Dorsolateral prefrontal cortex (tissue), 120 donors: ENCODE measurements at regions of chr10 and their contacts with region 1.

Region 1: GRCh38 chr10:13348216-13349017 is at the start of gene SEPHS1:
- DNase-seq: peak; percentile 45 to 78 (median 64)
- H3K4me3 ChIP-seq: peak within 1 kb of the TSS; percentile 65 to 99 (median 83)
- H3K27ac ChIP-seq: peak within 1 kb of the TSS; percentile 61 to 97 (median 91)
- H3K27me3 ChIP-seq: peaks cover 0 to 23% (median 0%) of the 10 kb centered on the region in 45 donors
- CTCF ChIP-seq: peak in 35 of 56 donors; percentile 8 to 53 (median 24)
- total RNA-seq, gene SEPHS1: 17.7 to 44.5 (median 30.7) TPM

Region 2: DNA sequence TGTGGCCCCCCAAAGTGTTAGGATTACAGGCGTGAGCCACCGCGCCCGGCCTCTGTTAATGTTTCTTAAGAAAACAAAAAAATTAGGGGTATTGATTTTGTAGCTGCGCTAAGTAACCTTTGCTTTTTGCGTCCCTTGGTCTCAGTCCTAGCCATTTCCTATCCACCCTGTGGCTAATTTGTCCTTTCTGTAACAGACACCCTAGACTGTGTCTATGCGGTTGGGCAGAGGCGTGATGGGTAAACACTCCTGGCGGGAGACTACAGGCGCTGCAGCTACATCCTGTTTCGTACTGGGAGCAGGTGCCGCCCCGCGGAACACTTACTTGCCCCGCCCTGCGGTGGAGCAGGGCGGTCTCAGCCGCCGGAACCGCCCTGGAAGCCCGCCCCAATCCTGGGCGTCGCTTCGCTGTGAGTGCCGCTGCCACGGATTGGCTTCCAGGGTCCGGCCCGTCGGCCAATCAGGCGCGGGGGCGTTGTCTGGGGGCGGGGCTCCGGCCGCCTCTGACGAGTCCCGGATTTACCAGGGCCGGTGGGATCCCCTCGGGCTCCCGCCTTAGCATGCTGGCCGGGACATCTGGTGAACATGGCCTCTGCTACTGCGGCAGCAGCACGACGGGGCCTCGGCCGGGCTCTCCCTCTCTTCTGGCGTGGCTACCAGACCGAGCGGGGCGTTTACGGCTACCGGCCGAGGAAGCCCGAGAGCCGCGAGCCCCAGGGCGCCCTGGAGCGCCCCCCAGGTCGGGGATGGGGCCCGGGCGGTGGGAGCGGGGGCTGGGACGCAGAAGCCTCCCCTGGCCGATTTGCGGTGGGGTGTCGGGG is 1279.8 kb before region 1 on chr10 and contains the start of gene DHTKD1:
- intact Hi-C with region 1: loop called in 1 of 2 experiments (anchors 10 kb)
- DNase-seq: peak; percentile 97 to 100 (median 98)
- H3K4me3 ChIP-seq: peak within 1 kb of the TSS; percentile 56 to 100 (median 96)
- H3K27ac ChIP-seq: peak within 1 kb of the TSS in 58 of 59 donors; percentile 27 to 96 (median 88)
- H3K27me3 ChIP-seq: no peaks in the 10 kb centered on the region
- CTCF ChIP-seq: peak in 48 of 56 donors; percentile 8 to 60 (median 42)
- total RNA-seq, gene DHTKD1: 19.5 to 48.8 (median 27.8) TPM

Region 3: GRCh38 chr10:13099666-13100348 is 248.6 kb before region 1 on chr10 and contains the start of gene OPTN:
- intact Hi-C with region 1: loop called in 1 of 2 experiments (anchors 5 kb)
- DNase-seq: peak; percentile 62 to 87 (median 74)
- H3K4me3 ChIP-seq: peak within 1 kb of the TSS; percentile 75 to 99 (median 93)
- H3K27ac ChIP-seq: peak within 1 kb of the TSS; percentile 84 to 99 (median 96)
- H3K27me3 ChIP-seq: no peaks in the 10 kb centered on the region
- CTCF ChIP-seq: peak in 55 of 56 donors; percentile 48 to 79 (median 67)
- total RNA-seq, gene OPTN: 84.3 to 188 (median 136) TPM

Region 4: GRCh38 chr10:13160934-13161856 is 187.2 kb before region 1 on chr10 and contains the start of gene MCM10:
- intact Hi-C with region 1: loop called in 1 of 2 experiments (anchors 2 kb)
- DNase-seq: peak; percentile 98 to 100 (median 99)
- H3K4me3 ChIP-seq: peak within 1 kb of the TSS; percentile 22 to 76 (median 54)
- H3K27ac ChIP-seq: peak within 1 kb of the TSS in 2 of 59 donors; percentile 11 to 48
- H3K27me3 ChIP-seq: no peaks in the 10 kb centered on the region
- CTCF ChIP-seq: peak; percentile 88 to 100 (median 96)
- total RNA-seq, gene MCM10: 0.11 to 2.1 (median 0.36) TPM in 51 of 120 experiments, not detected in the others

Region 5: GRCh38 chr10:13206546-13207443 is 141.6 kb before region 1 on chr10:
- intact Hi-C with region 1: loop called in 1 of 2 experiments (anchors 5 kb)
- DNase-seq: no peak
- H3K4me3 ChIP-seq: no peak overlapping the region
- H3K27ac ChIP-seq: no peak overlapping the region
- H3K27me3 ChIP-seq: no peaks in the 10 kb centered on the region
- CTCF ChIP-seq: peak; percentile 35 to 73 (median 54)

Region 6: GRCh38 chr10:13299437-13300287 is 48.8 kb before region 1 on chr10 and contains the start of gene PHYH:
- intact Hi-C with region 1: loop called (anchors 2 kb)
- DNase-seq: peak; percentile 78 to 94 (median 90)
- H3K4me3 ChIP-seq: peak within 1 kb of the TSS; percentile 57 to 96 (median 83)
- H3K27ac ChIP-seq: peak within 1 kb of the TSS; percentile 87 to 100 (median 97)
- H3K27me3 ChIP-seq: no peaks in the 10 kb centered on the region
- CTCF ChIP-seq: peak in 37 of 56 donors; percentile 8 to 61 (median 30)
- total RNA-seq, gene PHYH: 19.2 to 43.7 (median 30.0) TPM

Region 7: DNA sequence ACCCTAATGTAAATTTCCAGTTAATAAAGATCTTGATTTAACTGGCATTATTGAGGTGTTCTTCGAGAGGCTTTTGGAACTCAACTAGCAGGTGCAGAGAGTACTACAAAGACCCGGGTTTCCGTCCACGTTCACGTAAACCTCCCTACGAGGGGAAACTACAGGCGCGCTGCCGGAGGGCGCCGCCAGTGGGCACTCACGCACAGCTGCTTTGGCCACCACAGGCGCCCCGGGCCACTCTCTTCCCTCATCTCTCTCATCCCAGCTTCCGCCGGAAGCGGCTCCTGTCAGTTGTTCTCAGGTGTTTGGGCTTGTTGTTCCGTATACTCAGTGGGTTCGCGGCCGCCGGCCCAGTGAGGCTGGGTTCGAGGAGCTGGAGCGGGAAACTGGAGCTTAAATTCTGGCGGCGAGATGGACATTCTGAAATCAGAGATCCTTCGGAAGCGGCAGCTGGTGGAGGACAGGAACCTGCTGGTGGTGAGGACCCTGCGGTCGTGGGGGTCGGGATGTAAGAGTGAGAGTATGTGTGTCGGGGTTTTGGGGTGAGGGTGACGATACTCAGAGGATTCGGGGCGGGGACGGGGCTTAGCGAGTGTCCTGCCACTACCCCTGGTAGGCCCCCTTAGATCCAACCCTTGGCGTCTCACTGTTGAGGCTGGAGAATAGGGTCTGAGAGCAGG is 238.4 kb after region 1 on chr10 and contains the start of gene PRPF18:
- intact Hi-C with region 1: loop called in 1 of 2 experiments (anchors 10 kb)
- DNase-seq: peak; percentile 90 to 97 (median 94)
- H3K4me3 ChIP-seq: peak within 1 kb of the TSS; percentile 58 to 99 (median 89)
- H3K27ac ChIP-seq: peak within 1 kb of the TSS in 28 of 59 donors; percentile 10 to 84 (median 60)
- H3K27me3 ChIP-seq: peaks cover 0 to 26% (median 0%) of the 10 kb centered on the region in 45 donors
- CTCF ChIP-seq: peak; percentile 95 to 100 (median 99)
- total RNA-seq, gene PRPF18: 16.6 to 41.9 (median 29.6) TPM